ENCODE measurements at regions of chr11 and their contacts with region 1.

Region 1: GRCh38 chr11:44852159-44852747 is 98.4 kb downstream of the TP53I11 start:
- DNase-seq: no peak
- ATAC-seq: no peak
- H3K4me3 ChIP-seq: no peak overlapping the region
- H3K4me3 Mint-ChIP-seq: no peak overlapping the region
- H3K27ac ChIP-seq: no peak overlapping the region
- H3K27ac Mint-ChIP-seq: no peak overlapping the region
- H3K4me1 ChIP-seq: no peaks in the 10 kb centered on the region
- H3K4me1 Mint-ChIP-seq: no peaks in the 10 kb centered on the region
- H3K27me3 ChIP-seq: no peaks in the 10 kb centered on the region
- H3K27me3 Mint-ChIP-seq: no peaks in the 10 kb centered on the region
- CTCF ChIP-seq: no peak

Region 2: DNA sequence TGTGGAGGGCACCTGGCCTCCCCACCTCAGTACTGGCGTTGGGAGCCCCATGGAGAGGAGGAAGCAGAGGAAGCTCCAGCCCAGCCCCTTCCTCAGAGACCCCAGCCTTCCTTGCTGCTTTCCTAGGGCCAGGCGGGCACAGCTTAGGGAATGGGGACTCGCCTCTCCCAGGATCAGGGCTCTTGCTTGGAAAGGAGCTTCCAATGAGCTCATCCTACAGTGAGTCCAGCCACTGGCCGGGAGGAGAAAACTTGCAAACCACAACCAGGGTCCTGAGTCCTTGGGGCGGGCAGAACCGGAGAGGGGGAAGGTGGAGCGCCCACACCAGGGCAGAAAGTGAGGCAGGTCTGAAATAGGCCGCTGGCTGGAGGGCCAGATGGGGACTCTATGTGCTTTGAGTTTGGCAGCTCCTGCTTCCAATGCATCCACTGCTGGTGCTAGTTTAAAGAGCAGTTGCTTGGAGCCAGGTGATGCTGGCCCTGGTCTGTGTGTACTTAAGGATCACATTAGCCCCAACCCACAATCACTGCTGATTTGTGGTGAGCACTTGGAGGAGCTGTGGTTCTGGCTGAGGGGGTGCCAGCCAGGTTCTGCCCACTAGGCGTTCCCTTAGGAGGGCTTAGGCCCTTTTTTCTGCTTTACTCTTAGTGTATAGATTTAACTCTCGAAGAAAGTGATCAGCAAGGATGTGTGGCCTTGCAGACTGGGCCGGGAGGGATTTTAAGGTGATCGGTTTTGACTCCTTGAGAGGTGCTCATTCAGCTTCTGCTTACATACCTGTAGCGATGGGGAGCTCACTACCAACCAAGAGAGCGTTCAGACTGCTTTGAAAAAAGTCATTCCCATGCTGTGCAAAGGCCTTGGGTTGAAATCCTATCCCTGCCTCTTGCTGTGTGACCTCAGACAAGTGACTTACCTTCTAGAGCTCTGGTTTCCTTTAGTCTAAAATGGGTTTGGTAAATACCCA is 16.5 kb after region 1 on chr11:
- CTCF ChIA-PET with region 1: interaction called, 3 read pairs
- POLR2A ChIA-PET with region 1: no interaction called
- intact Hi-C with region 1: loop called in 1 of 2 experiments (anchors 2 kb)
- DNase-seq: no peak
- ATAC-seq: no peak
- H3K4me3 ChIP-seq: no peak overlapping the region
- H3K4me3 Mint-ChIP-seq: no peak overlapping the region
- H3K27ac ChIP-seq: no peak overlapping the region
- H3K27ac Mint-ChIP-seq: no peak overlapping the region
- H3K4me1 ChIP-seq: no peaks in the 10 kb centered on the region
- H3K4me1 Mint-ChIP-seq: peaks cover 1% of the 10 kb centered on the region
- H3K27me3 ChIP-seq: no peaks in the 10 kb centered on the region
- H3K27me3 Mint-ChIP-seq: no peaks in the 10 kb centered on the region
- CTCF ChIP-seq: no peak

Region 3: DNA sequence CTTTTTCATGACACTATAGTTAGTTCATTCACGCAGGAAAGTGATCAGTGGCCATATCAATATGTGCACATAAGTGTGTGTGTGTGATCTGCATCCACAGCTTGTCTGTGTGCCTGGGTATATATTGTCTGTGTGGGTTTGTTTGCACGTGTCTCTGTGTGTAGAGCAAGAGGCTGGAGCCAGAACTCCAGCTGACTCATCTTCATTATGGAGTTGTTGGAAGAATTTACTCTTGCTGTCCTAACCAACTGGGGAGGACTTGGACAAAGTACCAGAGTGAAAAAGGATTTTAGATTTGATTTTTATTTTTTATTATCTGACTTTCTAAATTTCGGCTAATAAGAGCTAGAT is 34.5 kb after region 1 on chr11:
- CTCF ChIA-PET with region 1: no interaction called
- POLR2A ChIA-PET with region 1: no interaction called
- intact Hi-C with region 1: loop called in 1 of 2 experiments (anchors 5 kb)
- DNase-seq: no peak
- ATAC-seq: no peak
- H3K4me3 ChIP-seq: no peak overlapping the region
- H3K4me3 Mint-ChIP-seq: no peak overlapping the region
- H3K27ac ChIP-seq: no peak overlapping the region
- H3K27ac Mint-ChIP-seq: no peak overlapping the region
- H3K4me1 ChIP-seq: no peaks in the 10 kb centered on the region
- H3K4me1 Mint-ChIP-seq: no peaks in the 10 kb centered on the region
- H3K27me3 ChIP-seq: no peaks in the 10 kb centered on the region
- H3K27me3 Mint-ChIP-seq: no peaks in the 10 kb centered on the region
- CTCF ChIP-seq: no peak